GM12878 (cell line): ENCODE measurements at regions of chr10 and their contacts with region 1.

Region 1: DNA sequence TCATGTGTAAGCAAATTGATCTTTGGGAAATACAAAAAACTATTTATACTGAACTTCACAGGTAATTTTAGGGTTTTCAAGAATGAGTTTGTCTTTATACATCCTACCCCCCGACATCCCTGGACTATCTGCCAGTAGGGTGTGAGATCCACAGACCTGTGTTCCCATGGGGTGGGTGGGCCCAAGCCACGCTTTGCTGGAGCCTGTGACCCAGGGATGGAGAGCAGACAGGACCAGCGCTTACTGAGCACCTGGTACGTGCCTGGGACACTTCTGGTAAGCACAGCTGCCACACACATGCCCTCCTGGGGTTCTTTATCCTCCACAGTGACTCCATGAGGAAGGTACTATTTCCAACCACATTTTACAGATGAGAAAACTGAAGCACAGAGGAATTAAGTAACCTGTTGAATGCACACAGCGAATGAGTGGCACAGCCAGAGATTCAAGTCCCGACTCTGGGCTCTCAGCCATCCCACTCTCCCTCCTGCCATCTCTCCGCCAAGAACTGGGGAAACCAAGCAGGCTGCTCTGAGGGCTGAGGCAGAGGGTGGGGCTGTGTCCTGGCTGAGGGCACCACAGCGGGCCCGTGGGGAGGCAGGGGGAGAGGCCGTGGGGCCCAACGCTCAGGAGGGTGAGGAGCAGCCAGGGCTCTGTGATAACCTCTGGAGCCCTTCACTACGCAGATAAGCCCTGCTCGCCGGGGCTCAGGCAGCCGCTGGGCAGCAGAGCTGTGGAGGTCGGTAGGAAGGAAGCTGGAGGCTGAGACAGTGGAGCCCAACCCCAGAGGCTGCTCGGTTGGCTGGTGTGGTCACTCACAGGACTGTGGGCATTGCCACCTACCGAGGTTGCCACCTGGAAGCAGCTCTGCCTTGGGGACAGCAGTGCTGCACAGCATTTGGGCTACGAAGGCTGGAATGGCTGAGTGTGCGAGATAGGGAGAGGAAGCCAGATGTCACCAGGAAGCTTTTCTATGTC is 124.2 kb downstream of the ARHGAP22 start:
- DNase-seq: no peak
- ATAC-seq: no peak
- H3K4me3 ChIP-seq: no peak overlapping the region
- H3K27ac ChIP-seq: no peak overlapping the region
- H3K4me1 ChIP-seq: no peaks in the 10 kb centered on the region
- H3K27me3 ChIP-seq: no peaks in the 10 kb centered on the region; a peak in 2 of 4 replicates
- CTCF ChIP-seq: no peak
- EP300 ChIP-seq: no peak
- POLR2A ChIP-seq: no peak
- RAD21 ChIP-seq: no peak

Region 2: DNA sequence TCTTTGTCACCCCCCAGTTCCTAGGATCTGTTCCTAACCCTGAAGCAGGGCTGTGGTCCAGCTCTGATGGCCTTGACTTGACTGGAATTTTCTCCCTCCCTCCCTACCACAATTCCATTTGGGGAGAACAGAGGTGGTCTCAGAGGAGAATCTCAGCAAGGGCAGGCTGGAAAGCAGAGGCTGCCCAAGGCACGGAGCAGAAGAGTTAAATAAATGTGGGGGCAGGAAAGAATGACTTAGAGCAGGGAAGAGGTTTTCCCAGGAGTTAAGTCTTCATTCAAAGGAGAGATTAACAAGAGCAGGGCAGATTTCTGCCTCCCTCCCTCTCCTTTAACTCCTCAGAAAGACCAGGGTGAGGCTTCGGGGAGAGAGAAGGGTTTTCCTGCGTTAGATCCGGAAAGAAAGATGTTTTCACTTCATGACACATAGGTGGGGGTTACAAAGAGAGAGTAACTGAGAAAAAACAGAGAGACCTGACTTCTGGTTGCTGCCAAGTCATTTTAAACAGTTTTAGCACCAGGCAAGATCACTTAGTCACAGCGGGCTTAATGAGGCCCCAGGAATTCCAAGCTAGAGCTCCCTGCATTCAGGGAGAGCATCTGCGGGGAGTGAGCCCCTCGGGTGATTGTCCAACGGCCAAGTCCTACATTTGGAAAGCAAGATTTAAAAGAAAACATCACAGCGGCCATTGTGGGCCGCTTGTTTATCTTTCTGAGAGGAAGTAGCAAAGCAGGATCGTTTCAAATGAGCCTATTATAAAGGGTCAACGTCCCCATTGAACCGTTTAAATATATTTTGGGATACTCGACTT is 45.5 kb after region 1 on chr10:
- CTCF ChIA-PET with region 1: interaction called, 3 read pairs
- POLR2A ChIA-PET with region 1: no interaction called
- RAD21 ChIA-PET with region 1: no interaction called
- SMC1A ChIA-PET with region 1: no interaction called
- in situ Hi-C with region 1: no loop called
- intact Hi-C with region 1: loop called (anchors 5 kb)
- DNase-seq: no peak
- ATAC-seq: no peak
- H3K4me3 ChIP-seq: no peak overlapping the region
- H3K27ac ChIP-seq: no peak overlapping the region
- H3K4me1 ChIP-seq: no peaks in the 10 kb centered on the region
- H3K27me3 ChIP-seq: peaks cover 0 to 9% of the 10 kb centered on the region in 2 experiments; a peak in 2 of 4 replicates
- CTCF ChIP-seq: no peak
- EP300 ChIP-seq: no peak
- POLR2A ChIP-seq: no peak
- RAD21 ChIP-seq: no peak

Region 3: DNA sequence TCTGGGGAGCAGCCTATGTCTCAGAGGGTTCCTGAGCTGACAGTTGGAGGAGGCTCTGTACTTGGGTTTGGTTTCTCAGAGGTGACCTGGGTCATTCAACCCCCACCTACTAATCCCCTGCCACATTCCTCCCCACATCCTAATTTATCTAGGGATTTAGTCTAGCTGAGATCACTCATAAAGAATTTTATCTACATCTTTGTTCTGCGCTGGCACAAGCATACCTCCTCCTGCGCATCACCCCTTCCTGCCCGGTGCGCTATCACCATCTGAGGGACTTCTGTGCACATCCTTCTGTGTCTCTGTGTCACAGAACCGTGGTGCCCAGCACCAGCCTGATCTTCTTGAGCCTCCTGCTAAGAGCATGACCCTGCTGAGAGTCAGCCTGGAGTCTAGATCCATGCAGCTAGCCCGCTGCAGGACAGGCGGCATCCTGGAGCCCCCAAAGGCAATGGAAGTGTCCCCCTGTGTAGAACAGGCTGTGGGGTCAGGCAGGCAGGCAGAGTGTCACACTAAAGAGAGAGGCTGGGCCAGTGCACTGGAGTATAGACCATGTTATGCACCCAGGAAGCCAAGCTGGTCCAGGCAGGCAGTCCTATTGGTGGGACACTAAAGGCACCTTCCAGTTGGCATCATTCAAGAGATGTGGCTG is 60.6 kb after region 1 on chr10:
- CTCF ChIA-PET with region 1: no interaction called
- POLR2A ChIA-PET with region 1: no interaction called
- RAD21 ChIA-PET with region 1: no interaction called
- SMC1A ChIA-PET with region 1: no interaction called
- in situ Hi-C with region 1: no loop called
- intact Hi-C with region 1: no loop called
- DNase-seq: no peak
- ATAC-seq: no peak
- H3K4me3 ChIP-seq: no peak overlapping the region
- H3K27ac ChIP-seq: no peak overlapping the region
- H3K4me1 ChIP-seq: no peaks in the 10 kb centered on the region
- H3K27me3 ChIP-seq: no peaks in the 10 kb centered on the region
- CTCF ChIP-seq: no peak
- EP300 ChIP-seq: no peak
- POLR2A ChIP-seq: no peak
- RAD21 ChIP-seq: no peak

Region 4: DNA sequence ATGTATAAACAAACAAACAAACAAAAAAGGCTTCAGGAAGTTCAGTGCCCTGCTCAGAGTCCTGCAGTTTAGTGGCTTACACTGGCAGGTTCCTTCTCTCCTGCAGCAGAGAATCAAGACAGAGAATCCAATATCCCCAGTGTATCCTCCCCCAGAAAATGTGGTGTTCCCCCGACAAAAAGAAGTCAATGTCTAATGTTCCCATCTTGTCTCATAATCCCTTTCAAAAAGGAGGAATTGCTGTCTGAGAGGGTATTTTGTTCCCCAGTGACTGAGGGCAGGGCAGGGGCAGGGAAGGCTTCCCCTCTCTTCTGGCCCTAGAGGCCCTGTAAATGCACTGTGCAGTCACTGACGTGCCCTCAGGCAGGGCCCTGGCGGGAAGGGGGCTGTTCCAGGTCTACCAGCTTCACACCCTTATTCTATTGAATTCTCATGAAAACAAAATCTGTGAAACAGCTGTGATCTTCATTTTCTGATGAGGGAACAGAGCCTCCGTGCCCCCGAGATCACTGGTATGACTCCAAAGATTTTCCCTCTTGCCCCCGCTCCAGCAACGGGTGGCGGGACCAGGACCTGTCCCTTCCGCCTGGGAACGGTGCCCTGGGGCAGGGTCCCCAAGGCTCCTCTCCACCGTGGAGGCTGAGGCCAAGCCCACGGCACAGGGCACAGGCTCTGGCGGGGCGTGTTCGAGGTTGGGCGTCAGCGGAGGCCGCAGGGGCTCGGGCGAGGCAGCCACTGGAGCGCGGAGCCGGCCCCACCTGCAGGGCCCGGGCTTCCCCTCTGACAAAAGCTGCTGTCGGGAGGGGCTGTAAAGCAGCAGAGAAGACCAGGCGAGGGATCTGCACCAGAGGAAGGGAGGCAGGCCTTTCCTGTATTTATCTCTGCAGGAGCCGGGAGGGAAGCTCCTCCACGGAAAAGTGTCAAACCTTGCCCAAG is 190.6 kb after region 1 on chr10:
- CTCF ChIA-PET with region 1: no interaction called
- POLR2A ChIA-PET with region 1: no interaction called
- RAD21 ChIA-PET with region 1: no interaction called
- SMC1A ChIA-PET with region 1: no interaction called
- in situ Hi-C with region 1: no loop called
- intact Hi-C with region 1: no loop called
- DNase-seq: no peak
- ATAC-seq: peak; percentile 82
- H3K4me3 ChIP-seq: peak overlapping the region; percentile 56
- H3K27ac ChIP-seq: peak overlapping the region; percentile 100
- H3K4me1 ChIP-seq: peaks cover 43% of the 10 kb centered on the region
- H3K27me3 ChIP-seq: no peaks in the 10 kb centered on the region; a peak in 1 of 4 replicates
- CTCF ChIP-seq: no peak
- EP300 ChIP-seq: peak; percentile 66 to 87; a peak in 3 of 4 replicates
- POLR2A ChIP-seq: peak; percentile 80
- RAD21 ChIP-seq: peak; percentile 25; the same call in 1 of the 2 replicates